Right ventricle myocardium inferior (tissue), 1 donor: ENCODE measurements at regions of chr12 and their contacts with region 1.

Region 1: GRCh38 chr12:10562306-10562933 is 51.0 kb downstream of the MAGOHB start:
- DNase-seq: no peak
- ATAC-seq: no peak

Region 2: DNA sequence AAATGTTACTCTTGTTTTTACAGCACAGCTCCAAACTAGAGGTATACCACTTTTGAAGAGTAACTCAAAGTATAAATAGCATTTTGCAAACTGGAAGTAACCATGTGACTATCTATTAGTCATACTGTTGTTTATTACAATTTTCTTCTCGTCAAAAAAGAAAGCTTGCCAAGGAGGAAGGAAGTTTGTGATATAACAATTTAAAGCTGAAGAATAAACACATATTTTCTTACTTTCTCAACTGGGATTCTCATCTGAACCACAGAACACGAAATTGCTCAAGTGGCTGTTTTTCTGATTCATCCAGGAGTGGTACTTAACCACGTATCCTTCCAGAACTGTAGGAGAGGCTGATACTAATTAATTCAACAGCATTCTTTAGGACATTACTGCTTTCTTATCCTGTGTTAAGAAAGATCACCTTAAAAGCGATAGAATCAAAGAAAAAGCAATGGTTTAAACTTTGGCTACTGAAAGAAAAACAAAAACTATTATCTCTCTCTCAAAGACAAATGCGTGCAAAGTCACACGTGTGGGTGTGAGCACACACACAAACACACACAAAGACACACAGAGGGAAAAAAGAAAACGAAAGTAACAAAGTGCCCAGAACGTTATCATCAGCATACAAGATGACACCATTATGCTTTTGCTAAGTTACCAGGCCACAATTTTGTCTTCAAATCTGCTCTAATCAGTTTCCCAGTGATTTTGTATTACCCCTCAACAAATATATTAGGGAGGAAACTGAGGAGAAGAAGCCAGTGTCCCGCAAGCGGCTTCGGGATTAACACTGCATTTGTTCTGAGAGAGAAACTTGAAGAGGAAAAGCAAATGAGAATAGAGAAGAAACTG is 692.9 kb before region 1 on chr12 and contains the start of gene CLEC2B:
- intact Hi-C with region 1: no loop called
- DNase-seq: peak; percentile 43
- ATAC-seq: peak; percentile 72
- total RNA-seq, gene CLEC2B: 6.8 TPM

Region 3: DNA sequence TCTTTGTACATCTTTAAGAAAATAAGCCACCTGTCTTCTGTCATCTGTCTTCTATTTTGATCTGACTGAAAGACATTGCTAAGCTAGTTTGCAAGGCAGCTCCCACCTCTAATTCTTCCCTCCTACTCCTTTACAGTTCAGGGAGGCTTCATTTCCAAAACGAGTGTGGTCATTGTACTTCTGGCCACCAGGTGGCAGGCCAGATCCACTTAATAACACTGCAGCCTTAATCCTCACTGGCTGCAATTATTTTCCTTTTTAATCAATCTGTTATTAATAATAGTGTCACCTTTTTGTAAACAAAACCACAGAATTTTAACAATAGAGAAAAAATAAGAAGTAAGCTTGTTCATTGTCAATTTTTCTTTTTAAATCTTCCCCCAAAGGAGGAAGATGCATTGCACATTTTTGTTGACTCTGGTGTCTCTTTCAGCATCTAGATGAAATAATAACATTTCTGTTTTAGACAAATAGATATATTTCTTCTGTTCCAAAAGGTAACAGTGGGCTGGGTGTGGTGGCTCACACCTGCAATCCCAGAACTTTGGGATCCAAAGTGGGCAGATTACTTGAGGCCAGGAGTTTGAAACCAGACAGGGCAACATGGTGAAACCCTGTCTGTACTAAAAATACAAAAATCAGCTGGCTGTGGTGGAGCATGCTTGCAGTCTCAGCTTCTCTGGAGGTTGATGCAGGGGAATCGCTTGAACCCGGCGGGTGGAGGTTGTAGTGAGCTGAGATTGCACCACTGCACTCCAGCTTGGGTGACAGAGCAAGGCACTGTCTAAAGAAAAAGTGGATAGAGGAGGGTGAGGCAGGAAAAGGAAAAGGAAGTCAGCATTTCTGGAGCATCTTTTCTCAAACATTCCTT is 326.4 kb before region 1 on chr12:
- intact Hi-C with region 1: loop called (anchors 2 kb)
- DNase-seq: peak; percentile 69
- ATAC-seq: peak; percentile 81

Region 4: GRCh38 chr12:10331642-10332239 is 230.7 kb before region 1 on chr12:
- intact Hi-C with region 1: loop called (anchors 1 kb)
- DNase-seq: no peak
- ATAC-seq: peak; percentile 48

Region 5: DNA sequence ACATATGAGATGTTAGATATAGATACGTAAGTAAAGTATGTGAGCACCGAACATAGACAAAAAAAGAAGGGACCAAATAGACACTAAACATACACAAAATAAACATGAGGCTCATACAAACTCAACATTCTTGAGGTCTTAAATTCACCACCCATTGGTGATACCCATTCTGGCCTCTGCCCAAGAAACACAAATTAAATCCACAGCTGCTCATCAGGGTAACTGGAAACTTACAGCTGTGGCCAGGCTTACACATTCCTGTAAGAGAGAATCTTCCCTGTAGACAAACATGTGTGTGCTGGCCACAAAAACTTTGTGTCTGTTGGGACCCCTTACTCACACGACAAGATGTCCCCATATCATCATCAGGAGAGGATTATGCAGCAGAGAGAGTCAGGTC is 28.5 kb after region 1 on chr12:
- intact Hi-C with region 1: no loop called
- DNase-seq: no peak
- ATAC-seq: no peak

Region 6: DNA sequence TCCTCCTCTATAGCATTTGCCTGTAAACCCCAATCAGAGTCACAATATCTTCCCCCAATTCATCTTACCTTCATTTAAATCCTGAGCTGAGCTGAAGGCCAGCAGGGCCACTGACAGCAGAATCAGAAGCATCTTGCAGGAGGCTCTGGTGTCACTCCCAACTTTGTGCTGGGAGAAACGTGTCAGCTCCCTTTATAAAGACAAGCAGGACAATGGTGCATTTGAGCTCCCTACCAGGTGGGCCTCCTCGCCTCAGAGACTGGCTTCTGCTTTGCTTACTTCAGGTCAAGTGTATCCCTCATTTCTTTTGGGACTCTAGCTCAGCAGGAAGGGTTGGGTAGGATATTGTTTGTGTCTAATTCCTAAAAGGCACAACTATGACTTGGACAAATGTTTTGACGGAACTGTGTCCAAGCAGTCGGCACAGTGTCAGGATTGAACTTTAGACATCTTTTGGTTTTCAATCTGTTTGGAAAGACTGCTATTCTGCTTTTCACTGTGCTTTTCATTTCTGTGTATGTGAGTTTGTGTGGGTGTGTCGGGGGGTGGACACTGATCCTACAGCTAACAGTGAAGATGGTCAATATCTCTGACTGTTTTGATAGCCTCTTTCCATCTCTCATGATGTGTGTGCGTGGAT is 321.8 kb after region 1 on chr12 and contains the start of gene PRH1:
- intact Hi-C with region 1: no loop called
- DNase-seq: no peak
- ATAC-seq: no peak
- total RNA-seq, gene PRH1: 4.2 TPM